ENCODE measurements at regions of chr3 and their contacts with region 1.

Region 1: DNA sequence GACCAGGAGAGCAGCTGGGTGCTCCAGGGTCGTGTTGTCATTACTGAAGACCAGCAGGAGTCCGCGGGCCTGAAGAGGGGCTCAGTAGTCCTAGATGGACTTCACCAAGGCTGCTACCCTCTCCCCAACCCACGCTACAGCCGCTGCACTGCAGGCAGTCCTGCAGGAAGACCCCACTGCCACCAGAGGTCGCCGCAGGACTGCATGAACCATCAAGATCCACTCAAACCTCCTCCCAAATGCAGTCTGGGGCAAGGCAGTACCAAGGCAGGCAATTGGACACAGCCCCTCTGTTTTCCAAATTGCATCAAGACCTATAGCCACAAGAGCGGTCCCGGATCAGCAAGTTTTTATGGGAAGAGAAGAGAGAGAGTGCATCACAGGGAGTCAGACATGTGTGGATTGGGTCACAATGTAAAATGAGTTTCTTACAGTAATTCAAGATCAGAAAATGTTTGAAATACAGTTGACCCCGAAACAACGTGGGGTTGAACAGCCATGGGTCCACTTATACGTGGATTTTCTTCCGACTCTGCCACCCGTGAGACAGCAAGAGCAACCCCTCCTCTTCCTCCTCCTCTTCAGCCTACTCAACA is 46.7 kb downstream of the DZIP1L start:
- DNase-seq: no peak
- H3K4me3 ChIP-seq: no peak overlapping the region
- H3K27ac ChIP-seq: no peak overlapping the region
- H3K4me1 ChIP-seq: no peaks in the 10 kb centered on the region
- H3K27me3 ChIP-seq: no peaks in the 10 kb centered on the region
- CTCF ChIP-seq: peak; percentile 89 to 96 (median 92)
- POLR2A ChIP-seq: no peak

Region 2: DNA sequence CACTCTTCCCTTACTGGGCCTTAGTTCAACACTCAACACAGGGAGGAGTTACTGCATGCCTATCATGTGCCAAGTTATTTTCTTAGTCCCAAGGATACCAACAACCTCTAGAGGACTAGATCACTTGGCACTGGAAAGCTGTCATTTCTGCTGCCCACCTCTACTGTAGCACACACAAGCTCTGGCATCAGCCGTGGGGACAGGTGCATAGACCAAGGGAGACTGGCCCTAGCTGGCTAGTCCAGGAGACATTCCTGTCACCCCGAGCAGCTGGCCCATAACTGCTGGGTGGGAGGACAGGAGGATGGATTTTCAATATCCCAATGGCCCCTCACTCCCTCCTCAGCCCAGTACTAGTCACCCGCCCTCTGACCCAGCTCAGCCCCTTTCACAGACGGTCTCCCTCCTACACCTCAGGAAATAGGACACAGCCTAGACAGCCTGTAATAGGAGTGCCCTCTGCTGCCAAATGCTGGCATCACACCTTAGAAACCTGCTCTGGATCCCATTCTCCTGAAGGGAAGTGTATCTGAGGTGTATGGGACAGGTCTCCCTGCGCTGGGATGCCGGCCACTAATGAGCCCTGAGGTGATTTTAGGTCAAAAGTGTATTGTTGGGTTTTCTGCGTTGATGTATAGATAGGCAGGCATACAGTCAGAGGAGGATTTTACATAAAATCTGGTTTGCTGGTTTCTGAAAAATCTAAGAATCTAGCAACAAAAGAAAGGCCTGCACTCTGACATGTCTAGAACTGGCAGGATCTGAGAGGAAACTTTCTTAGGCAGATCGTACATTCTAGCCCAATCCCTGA is 50.1 kb after region 1 on chr3:
- intact Hi-C with region 1: loop called (anchors 5 kb)
- DNase-seq: no peak
- H3K4me3 ChIP-seq: no peak overlapping the region
- H3K27ac ChIP-seq: no peak overlapping the region
- H3K4me1 ChIP-seq: peaks cover 4% of the 10 kb centered on the region
- H3K27me3 ChIP-seq: no peaks in the 10 kb centered on the region
- CTCF ChIP-seq: peak; percentile 72 to 79 (median 73)
- POLR2A ChIP-seq: no peak

Measured in vagina (tissue), 2 donors.